Gastrocnemius medialis (tissue), 4 donors: ENCODE measurements at regions of chr9 and their contacts with region 1.

Region 1: DNA sequence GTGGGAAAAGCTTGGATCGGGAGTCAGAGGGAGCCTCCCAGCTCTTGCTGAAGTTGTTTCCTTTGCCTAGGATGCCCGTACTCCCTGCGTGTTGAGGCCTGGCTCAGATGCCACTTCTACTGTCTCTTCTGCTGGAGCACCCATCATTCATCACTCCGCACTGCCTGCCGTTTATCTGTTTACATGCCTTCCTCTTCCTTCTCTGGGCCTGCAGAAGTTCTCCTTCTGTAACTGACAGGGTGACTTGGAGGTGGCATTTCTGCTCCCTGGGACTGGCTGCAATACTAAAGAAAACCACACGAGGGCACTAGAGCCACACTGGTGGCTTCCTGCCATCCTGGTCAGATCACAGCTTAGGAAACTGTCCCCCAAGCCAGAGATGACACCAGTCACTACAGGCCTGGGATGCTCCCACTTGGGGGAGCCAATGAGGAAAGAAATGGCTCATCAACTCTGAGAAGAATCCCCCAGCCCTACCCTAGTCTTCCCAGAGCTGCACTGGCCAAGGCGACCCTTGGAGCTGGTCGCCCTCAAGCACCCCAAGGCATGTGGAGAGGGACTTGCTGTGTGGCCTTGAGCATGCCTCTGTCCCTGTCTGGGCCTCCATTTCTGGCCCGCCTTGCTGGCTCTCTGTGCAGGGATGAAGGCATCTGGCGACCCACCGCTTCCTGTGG is 9.7 kb upstream of the SLC25A51 start:
- DNase-seq: peak; percentile 44 to 64
- ATAC-seq: peak; percentile 84 to 89
- H3K4me3 ChIP-seq: no peak overlapping the region
- H3K27ac ChIP-seq: no peak overlapping the region
- H3K4me1 ChIP-seq: no peaks in the 10 kb centered on the region
- H3K27me3 ChIP-seq: no peaks in the 10 kb centered on the region
- CTCF ChIP-seq: peak; percentile 92 to 98 (median 95)
- POLR2A ChIP-seq: no peak

Region 2: DNA sequence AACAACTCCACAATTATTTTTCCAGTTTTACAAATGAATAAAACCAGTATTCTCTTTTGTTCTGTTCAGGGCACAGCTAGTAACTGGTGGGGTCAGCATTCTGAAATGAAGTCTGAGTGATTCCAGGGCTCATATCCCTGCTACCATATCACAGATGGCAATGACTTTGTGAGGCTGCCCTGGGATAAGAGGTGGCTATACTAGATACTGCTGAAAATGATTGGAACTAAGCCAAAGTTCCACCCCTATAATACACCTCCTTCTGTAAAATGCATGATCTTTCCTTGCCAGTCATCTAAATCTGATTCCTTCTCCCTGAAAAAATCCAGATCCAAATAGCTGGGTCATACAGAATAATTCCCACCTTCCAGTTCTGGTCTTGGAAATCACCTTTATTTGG is 24.1 kb before region 1 on chr9:
- in situ Hi-C with region 1: no loop called
- intact Hi-C with region 1: no loop called
- DNase-seq: no peak
- ATAC-seq: no peak
- H3K4me3 ChIP-seq: no peak overlapping the region
- H3K27ac ChIP-seq: no peak overlapping the region
- H3K4me1 ChIP-seq: no peaks in the 10 kb centered on the region
- H3K27me3 ChIP-seq: no peaks in the 10 kb centered on the region
- CTCF ChIP-seq: no peak
- POLR2A ChIP-seq: no peak

Region 3: GRCh38 chr9:37994639-37995347 is 81.2 kb after region 1 on chr9:
- in situ Hi-C with region 1: no loop called
- intact Hi-C with region 1: no loop called
- DNase-seq: peak; percentile 83 to 90
- ATAC-seq: peak; percentile 92 to 97
- H3K4me3 ChIP-seq: peak overlapping the region in 3 of 4 donors; percentile 7 to 31 (median 29)
- H3K27ac ChIP-seq: peak overlapping the region; percentile 76 to 88 (median 82)
- H3K4me1 ChIP-seq: peaks cover 19 to 27% of the 10 kb centered on the region in 2 donors
- H3K27me3 ChIP-seq: no peaks in the 10 kb centered on the region
- CTCF ChIP-seq: no peak
- POLR2A ChIP-seq: peak in 1 of 2 donors; percentile 27

Region 4: GRCh38 chr9:38079461-38080031 is 165.9 kb after region 1 on chr9:
- in situ Hi-C with region 1: loop called in 2 of 4 experiments (anchors 10 kb)
- intact Hi-C with region 1: no loop called
- DNase-seq: peak; percentile 54 to 71
- ATAC-seq: peak; percentile 86 to 87
- H3K4me3 ChIP-seq: no peak overlapping the region
- H3K27ac ChIP-seq: peak overlapping the region in 1 of 4 donors; percentile 44
- H3K4me1 ChIP-seq: peaks cover 0 to 9% of the 10 kb centered on the region in 2 donors
- H3K27me3 ChIP-seq: no peaks in the 10 kb centered on the region
- CTCF ChIP-seq: no peak
- POLR2A ChIP-seq: no peak

Region 5: GRCh38 chr9:38154501-38155421 is 241.1 kb after region 1 on chr9:
- in situ Hi-C with region 1: loop called in 1 of 4 experiments (anchors 5 kb)
- intact Hi-C with region 1: no loop called
- DNase-seq: no peak
- ATAC-seq: no peak
- H3K4me3 ChIP-seq: no peak overlapping the region
- H3K27ac ChIP-seq: no peak overlapping the region
- H3K4me1 ChIP-seq: no peaks in the 10 kb centered on the region
- H3K27me3 ChIP-seq: no peaks in the 10 kb centered on the region
- CTCF ChIP-seq: no peak
- POLR2A ChIP-seq: no peak

Region 6: GRCh38 chr9:38362852-38363593 is 449.4 kb after region 1 on chr9:
- in situ Hi-C with region 1: loop called in 1 of 4 experiments (anchors 10 kb)
- intact Hi-C with region 1: loop called (anchors 1 kb)
- DNase-seq: no peak
- ATAC-seq: peak; percentile 64 to 84
- H3K4me3 ChIP-seq: peak overlapping the region in 1 of 4 donors; percentile 6
- H3K27ac ChIP-seq: no peak overlapping the region
- H3K4me1 ChIP-seq: peaks cover 2 to 4% of the 10 kb centered on the region in 2 donors
- H3K27me3 ChIP-seq: no peaks in the 10 kb centered on the region
- CTCF ChIP-seq: peak in 3 of 5 experiments; percentile 24 to 54 (median 48)
- POLR2A ChIP-seq: no peak

Region 7: DNA sequence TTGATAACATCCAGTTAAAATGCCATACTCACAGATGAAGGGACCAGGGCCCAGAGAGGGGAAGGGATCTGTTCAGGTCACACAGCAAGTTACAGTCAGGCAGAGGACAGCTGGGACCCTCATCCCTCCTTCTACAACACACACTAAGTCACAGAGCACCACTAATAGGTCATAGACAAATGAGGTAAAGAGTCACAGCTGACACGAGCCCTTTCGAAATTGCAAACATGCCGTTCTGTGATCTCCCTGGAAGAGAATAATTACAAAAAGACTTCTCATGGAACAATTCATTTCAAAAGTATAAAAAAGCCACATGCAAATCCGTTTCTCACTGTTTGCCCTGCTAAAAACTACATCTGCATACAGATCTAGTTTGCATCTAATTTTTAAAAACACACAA is 495.1 kb after region 1 on chr9:
- in situ Hi-C with region 1: loop called in 3 of 4 experiments (anchors 5 to 10 kb)
- intact Hi-C with region 1: no loop called
- DNase-seq: no peak
- ATAC-seq: no peak
- H3K4me3 ChIP-seq: no peak overlapping the region
- H3K27ac ChIP-seq: no peak overlapping the region
- H3K4me1 ChIP-seq: no peaks in the 10 kb centered on the region
- H3K27me3 ChIP-seq: peaks cover 8 to 16% (median 10%) of the 10 kb centered on the region in 3 donors
- CTCF ChIP-seq: no peak
- POLR2A ChIP-seq: no peak